Posterior cingulate gyrus (tissue), 11 donors: ENCODE measurements at regions of chr15 and their contacts with region 1.

Region 1: DNA sequence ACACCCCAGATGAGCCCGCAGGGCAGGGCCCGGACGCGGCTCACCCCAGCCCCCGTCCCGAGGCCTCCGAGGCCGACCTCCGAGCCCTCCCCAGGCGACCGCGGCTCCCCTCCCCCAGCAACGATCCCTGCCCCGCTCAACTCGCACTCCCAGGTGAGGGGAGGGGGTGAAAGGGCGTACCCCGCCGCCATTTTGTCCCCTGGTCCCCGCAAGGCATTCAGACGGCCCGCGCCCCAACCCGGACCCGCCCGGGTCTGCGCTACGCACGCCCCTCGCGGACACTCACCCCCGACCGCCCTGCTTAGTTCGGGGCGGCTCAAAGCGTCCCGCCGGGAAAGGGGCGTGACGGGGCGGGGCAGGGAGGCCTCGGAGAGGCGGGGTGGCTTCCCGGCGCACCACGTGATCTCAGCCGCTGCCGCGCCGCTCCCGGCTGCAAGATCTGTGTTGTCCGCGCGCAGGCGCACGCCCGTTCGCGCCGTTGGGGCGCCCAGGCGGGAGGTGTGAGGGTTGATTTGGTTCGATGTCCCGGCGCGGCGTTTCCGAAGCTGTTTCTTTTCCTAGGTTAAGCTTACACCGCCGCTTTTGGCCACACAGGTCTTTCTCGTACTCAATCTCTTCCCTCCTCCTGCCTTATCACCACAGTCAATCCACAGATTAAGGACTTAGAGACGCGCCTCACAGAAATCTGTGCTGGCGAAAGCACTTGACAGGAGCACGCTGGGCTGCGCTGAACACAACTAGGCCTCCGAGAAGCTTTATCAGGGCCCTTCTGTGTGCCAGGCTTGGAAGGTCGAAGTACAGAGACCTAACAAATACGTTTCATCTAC is at the start of gene SCAPER:
- DNase-seq: peak; percentile 88 to 99 (median 93)

Region 2: GRCh38 chr15:76931397-76932007 is 26.3 kb after region 1 on chr15 and contains the start of gene RCN2:
- intact Hi-C with region 1: loop called (anchors 1 kb)
- DNase-seq: peak; percentile 90 to 99 (median 96)